Endothelial cell of umbilical vein (primary cell): ENCODE measurements at regions of chr12 and their contacts with region 1.

Region 1: DNA sequence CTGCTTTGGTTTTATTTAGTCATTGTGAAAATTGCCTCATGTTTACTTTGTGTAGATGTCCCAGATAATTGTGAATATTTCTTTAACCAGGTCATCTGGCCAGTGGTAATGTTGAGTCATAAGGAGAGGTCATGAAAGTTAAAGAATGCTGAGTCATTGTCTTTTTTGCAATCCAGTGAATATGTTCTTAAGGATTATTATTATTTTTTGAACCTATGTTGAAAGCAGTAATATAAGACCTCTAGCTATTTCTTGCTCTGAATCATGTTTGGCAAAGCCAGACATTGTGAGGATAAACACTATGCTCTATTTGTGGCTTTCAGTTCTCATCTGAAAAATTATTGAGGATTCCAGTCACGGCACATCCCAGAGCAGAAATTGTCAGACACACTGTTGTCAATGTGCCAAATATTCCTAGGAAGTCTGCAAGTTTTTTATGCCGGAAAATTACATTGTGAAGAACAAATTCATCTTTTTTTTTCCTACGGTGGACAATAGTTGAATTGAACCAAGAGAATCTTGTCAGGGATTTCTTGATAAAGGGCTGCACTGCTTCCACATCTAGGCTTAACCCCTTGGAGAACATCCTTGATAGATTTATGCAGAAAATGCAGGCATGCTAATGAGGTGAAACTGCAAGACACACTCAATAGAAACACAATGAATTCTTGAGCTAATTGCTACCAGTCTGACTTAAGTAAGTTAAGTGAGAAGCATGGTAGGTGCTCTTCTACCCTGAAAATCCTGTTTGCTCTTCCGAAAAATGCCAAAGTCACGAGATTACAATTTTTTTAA is 369.7 kb downstream of the ATP23 start:
- DNase-seq: peak; percentile 96
- H3K4me3 ChIP-seq: peak overlapping the region in 1 of 3 experiments; percentile 29
- H3K27ac ChIP-seq: peak overlapping the region; percentile 95
- H3K4me1 ChIP-seq: peaks cover 49% of the 10 kb centered on the region
- H3K27me3 ChIP-seq: no peaks in the 10 kb centered on the region
- CTCF ChIP-seq: no peak
- POLR2A ChIP-seq: peak; percentile 54

Region 2: DNA sequence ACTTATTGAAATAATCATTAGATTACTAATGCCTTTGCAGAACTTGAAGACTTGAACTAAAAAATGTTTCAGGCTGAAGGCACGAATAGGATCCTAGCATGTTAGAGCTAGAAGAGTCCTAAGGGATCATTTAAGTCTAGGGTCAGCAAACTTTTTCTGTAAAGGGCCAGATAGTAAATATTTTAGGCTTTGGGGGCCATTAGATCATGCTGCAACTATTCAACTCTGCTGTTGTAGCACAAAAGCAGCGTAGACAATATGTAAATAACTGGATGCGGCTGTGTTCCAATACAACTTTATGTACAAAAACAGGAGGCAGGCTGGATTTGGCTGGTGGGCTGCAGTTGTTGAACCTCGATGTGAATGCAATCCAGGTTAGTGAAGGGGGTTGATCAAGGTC is 148.0 kb before region 1 on chr12:
- CTCF ChIA-PET with region 1: no interaction called
- POLR2A ChIA-PET with region 1: no interaction called
- dilution Hi-C with region 1: no loop called
- intact Hi-C with region 1: no loop called
- DNase-seq: no peak
- H3K4me3 ChIP-seq: no peak overlapping the region
- H3K27ac ChIP-seq: no peak overlapping the region
- H3K4me1 ChIP-seq: no peaks in the 10 kb centered on the region
- H3K27me3 ChIP-seq: peaks cover 0 to 2% of the 10 kb centered on the region in 2 experiments
- CTCF ChIP-seq: no peak
- POLR2A ChIP-seq: no peak

Region 3: GRCh38 chr12:58176296-58176869 is 134.6 kb before region 1 on chr12:
- CTCF ChIA-PET with region 1: interaction called, 12 read pairs
- POLR2A ChIA-PET with region 1: no interaction called
- dilution Hi-C with region 1: no loop called
- intact Hi-C with region 1: no loop called
- DNase-seq: peak; percentile 14
- H3K4me3 ChIP-seq: no peak overlapping the region
- H3K27ac ChIP-seq: no peak overlapping the region
- H3K4me1 ChIP-seq: no peaks in the 10 kb centered on the region
- H3K27me3 ChIP-seq: peaks cover 0 to 4% of the 10 kb centered on the region in 2 experiments
- CTCF ChIP-seq: peak; percentile 29 to 39
- POLR2A ChIP-seq: no peak

Region 4: GRCh38 chr12:58202933-58203718 is 107.9 kb before region 1 on chr12:
- CTCF ChIA-PET with region 1: no interaction called
- POLR2A ChIA-PET with region 1: no interaction called
- dilution Hi-C with region 1: no loop called
- intact Hi-C with region 1: loop called (anchors 1 kb)
- DNase-seq: peak; percentile 90
- H3K4me3 ChIP-seq: no peak overlapping the region
- H3K27ac ChIP-seq: peak overlapping the region; percentile 4
- H3K4me1 ChIP-seq: peaks cover 21% of the 10 kb centered on the region
- H3K27me3 ChIP-seq: no peaks in the 10 kb centered on the region
- CTCF ChIP-seq: no peak
- POLR2A ChIP-seq: no peak

Region 5: GRCh38 chr12:58268069-58268468 is 43.0 kb before region 1 on chr12:
- CTCF ChIA-PET with region 1: interaction called, 3 read pairs
- POLR2A ChIA-PET with region 1: no interaction called
- dilution Hi-C with region 1: no loop called
- intact Hi-C with region 1: loop called (anchors 1 kb)
- DNase-seq: peak; percentile 87
- H3K4me3 ChIP-seq: no peak overlapping the region
- H3K27ac ChIP-seq: peak overlapping the region; percentile 66
- H3K4me1 ChIP-seq: peaks cover 18% of the 10 kb centered on the region
- H3K27me3 ChIP-seq: no peaks in the 10 kb centered on the region
- CTCF ChIP-seq: no peak
- POLR2A ChIP-seq: peak; percentile 33

Region 6: DNA sequence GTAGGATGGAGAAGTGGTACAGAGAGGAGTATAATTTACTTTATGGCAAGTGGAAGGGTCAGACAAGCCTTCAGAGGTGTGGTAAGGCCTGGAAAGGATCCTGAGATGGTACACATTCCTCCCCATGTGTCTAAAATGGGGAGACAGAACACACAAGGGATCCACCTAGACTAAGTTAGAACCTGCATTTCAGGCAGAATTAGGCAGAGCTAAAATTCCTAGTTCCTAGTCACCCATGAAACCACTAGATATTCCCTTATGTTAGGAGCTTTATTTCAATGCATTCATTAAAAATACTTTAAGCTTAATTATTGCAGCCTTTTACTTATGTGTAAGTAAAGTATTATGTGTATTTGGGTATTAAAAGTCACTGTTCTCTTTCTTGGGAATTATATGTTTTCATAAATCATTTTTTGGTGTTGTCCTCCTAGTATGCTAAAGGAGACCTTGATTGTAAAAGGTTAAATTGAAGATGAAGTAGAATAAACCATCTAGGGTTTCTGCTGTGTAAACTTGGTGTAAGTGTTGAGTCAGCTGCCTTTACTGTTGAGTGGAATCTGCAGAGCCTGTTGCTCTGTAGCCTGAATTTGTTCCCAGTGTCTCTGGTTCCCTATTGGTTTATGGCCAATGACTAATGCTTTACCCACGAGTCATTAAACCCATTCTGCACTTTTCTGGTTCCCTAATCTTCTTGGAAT is 53.5 kb after region 1 on chr12:
- CTCF ChIA-PET with region 1: no interaction called
- POLR2A ChIA-PET with region 1: no interaction called
- dilution Hi-C with region 1: no loop called
- intact Hi-C with region 1: no loop called
- DNase-seq: no peak
- H3K4me3 ChIP-seq: no peak overlapping the region
- H3K27ac ChIP-seq: no peak overlapping the region
- H3K4me1 ChIP-seq: no peaks in the 10 kb centered on the region
- H3K27me3 ChIP-seq: no peaks in the 10 kb centered on the region
- CTCF ChIP-seq: no peak
- POLR2A ChIP-seq: no peak

Region 7: DNA sequence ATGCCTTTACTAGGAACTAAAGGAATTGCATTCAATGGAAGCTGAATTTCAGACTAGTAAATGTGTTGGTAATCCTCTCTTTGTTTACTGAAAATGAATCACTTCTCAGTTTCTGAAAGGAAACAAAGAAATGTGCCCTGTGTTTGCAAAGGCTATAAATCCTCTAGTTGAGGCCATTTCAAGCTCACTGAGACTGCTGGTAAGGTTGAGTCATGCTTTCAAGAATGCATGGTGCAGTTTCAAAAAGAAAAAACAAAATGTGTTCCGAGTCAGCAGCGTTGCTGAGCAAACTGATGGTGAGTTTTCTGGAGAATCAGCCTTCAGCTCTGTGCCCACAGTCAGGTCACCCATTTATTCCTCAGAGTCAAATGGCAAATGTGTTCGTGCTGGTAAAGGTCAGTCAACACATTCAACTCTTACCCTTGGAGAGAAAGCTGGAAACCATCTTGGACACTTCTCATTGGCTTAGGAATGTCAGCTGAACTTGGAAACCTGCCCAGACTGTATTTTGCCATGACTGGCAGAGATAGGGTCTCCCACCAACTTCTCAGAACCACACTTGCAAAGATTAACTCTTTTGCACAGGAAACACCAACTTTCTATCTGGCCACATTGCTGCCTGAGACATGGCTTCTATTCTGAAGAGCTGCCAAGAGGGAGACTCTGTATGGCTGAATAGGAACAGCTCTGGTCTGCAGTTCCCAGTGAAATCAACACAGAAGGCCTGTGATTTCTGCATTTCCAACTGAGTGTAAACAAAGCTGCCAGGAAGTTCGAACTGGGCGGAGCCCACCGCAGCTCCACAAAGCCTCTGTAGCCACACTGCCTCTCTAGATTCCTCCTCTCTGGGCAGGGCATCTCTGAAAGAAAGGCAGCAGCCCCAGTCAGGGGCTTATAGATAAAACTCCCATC is 114.7 kb after region 1 on chr12:
- CTCF ChIA-PET with region 1: no interaction called
- POLR2A ChIA-PET with region 1: no interaction called
- dilution Hi-C with region 1: no loop called
- intact Hi-C with region 1: loop called (anchors 1 kb)
- DNase-seq: peak; percentile 95
- H3K4me3 ChIP-seq: peak overlapping the region in 1 of 3 experiments; percentile 1
- H3K27ac ChIP-seq: peak overlapping the region; percentile 85
- H3K4me1 ChIP-seq: peaks cover 25% of the 10 kb centered on the region
- H3K27me3 ChIP-seq: no peaks in the 10 kb centered on the region
- CTCF ChIP-seq: no peak
- POLR2A ChIP-seq: no peak